ENCODE measurements at regions of chr20 and their contacts with region 1.

Region 1: GRCh38 chr20:63911176-63911575 is 16.2 kb downstream of the DNAJC5 start:
- DNase-seq: no peak
- ATAC-seq: no peak
- H3K4me3 ChIP-seq: no peak overlapping the region
- H3K27ac ChIP-seq: no peak overlapping the region
- H3K4me1 ChIP-seq: peaks cover 40% of the 10 kb centered on the region
- H3K27me3 ChIP-seq: no peaks in the 10 kb centered on the region
- CTCF ChIP-seq: no peak
- EP300 ChIP-seq: no peak
- POLR2A ChIP-seq: no peak
- RAD21 ChIP-seq: no peak

Region 2: DNA sequence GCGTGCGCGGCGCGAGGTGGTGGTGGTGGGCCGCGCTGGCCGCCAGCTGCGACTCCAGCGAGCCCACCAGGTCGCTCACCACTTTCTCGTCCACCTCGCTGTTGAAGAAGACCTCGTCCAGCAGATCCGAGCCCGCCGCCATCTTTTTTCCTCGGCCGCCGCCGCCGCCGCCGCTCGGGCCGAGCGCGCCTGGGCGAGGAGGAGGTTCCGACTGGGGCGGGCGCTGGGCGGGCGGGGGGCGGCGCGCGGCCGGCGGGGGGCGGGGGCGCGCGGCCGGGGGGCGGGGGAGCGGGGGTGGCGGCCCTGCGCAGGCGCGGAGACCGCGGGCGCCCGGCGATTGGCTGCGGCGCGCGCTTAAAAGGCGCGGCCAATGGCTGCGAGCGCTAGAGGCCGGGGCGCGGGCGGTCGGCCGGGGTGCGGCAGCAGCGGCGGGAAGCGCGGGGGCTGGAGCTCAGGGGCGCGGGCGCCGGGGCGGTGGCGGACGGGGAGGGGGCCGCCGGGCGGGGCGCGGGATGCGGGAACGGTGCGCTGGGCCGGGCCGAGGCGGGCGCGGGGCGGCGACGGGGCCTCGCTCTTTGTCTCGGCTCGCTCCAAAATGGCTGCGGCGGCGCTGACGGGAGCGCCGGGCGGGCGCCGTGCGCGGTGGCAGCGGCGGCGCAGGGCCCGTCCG is 1845.4 kb before region 1 on chr20 and contains the start of gene TAF4:
- CTCF ChIA-PET with region 1: no interaction called
- POLR2A ChIA-PET with region 1: no interaction called
- in situ Hi-C with region 1: no loop called
- intact Hi-C with region 1: no loop called
- DNase-seq: peak; percentile 59
- ATAC-seq: no peak
- H3K4me3 ChIP-seq: peak within 1 kb of the TSS; percentile 70 to 81 (median 73)
- H3K27ac ChIP-seq: peak within 1 kb of the TSS; percentile 84
- H3K4me1 ChIP-seq: peaks cover 66% of the 10 kb centered on the region
- H3K27me3 ChIP-seq: no peaks in the 10 kb centered on the region
- CTCF ChIP-seq: no peak
- EP300 ChIP-seq: 0 out of 4 replicates have a peak, but pooled peaks of 1 of the 2 experiments have one; percentile 22
- POLR2A ChIP-seq: peak; percentile 92 to 95
- RAD21 ChIP-seq: peak; percentile 59; the same call in 1 of the 2 replicates
- total RNA-seq, gene TAF4: 12.0 and 12.2 TPM in 2 replicates

Region 3: DNA sequence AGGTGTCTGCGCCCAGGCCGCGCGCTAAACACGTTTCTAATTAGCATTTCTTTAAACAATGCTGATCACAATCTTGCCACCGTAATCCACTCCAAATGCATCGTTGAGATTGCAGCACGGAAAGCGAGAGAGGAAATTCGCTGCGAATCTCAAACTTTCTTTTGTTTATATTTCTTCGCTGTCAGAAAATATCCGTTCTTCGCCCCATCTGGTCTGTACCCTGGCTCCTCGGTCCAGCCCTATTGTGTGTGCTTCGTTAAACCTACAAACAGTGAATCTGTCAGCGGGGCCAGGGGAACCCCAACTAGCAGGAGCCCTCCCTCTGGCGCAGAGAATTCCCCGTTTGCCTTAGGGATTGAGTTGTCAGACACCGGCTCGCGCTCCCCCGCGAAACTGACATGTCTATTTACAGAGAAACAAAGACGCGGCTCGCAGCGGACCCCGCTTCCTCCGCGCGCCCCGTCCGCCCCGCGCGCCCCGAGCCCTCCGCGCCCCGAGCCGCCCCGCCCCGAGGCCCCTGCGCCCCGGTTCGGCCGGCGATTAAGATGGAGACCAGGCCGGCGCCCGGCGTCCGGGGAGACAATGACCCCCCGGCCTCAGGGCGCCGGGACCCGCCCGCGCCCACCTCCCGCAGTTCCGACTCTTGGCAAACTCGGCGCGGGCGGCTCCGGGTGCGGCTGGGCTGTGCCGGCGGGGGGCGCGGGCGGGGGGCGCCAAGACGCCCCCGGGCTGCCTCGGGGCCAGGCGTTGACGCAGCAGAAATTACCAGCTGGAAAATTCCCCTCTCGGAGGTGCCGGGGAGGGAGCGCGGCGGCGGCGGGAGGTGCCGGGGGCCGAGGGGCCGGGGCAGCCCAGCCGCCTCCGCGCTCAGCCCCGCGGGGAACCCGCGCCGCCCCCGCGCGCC is 81.0 kb before region 1 on chr20:
- CTCF ChIA-PET with region 1: no interaction called
- POLR2A ChIA-PET with region 1: no interaction called
- in situ Hi-C with region 1: no loop called
- intact Hi-C with region 1: no loop called
- DNase-seq: no peak
- ATAC-seq: no peak
- H3K4me3 ChIP-seq: peak overlapping the region; percentile 57 to 78 (median 68)
- H3K27ac ChIP-seq: no peak overlapping the region
- H3K4me1 ChIP-seq: peaks cover 58% of the 10 kb centered on the region
- H3K27me3 ChIP-seq: peaks cover 16 to 40% of the 10 kb centered on the region in 2 experiments
- CTCF ChIP-seq: no peak
- EP300 ChIP-seq: no peak
- POLR2A ChIP-seq: no peak
- RAD21 ChIP-seq: no peak

Region 4: DNA sequence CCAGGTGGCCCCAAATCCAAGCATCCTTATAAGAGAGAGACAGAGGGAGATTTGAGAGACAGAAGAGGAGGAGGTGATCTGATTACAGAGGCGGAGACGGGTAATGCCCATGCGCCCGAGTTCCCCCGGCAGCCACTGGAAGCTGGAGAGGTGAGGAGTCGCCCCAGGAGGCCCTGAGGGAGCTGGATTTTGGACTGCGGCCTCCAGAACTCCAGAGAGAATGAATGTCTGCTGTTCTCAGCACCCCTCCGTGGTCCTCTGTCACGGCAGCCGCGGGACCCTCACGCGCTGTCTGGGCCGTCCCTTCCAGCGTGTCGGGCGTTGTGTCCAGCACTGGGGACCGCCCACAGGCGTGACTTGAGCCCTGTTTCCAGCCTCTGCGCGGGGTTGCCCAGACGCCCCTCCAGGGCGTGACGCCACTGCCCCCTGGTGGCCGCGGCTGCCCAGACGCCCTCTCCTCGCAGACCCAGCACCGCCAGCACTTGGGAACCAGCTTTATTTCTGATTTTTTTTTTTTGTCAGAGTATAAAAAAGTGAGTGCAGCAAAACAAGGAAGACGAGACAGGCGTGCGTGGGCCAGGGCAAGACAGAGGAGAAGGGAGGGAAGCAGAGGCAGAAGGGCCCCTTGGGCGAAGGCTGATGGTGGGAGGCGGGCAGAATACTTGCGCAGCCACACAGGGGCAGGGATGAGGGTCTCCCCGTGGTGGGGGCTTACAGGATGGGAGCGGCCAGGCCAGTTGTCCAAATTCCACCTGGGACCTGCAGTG is 62.6 kb after region 1 on chr20:
- CTCF ChIA-PET with region 1: interaction called, 18 read pairs
- POLR2A ChIA-PET with region 1: interaction called, 3 read pairs
- in situ Hi-C with region 1: no loop called
- intact Hi-C with region 1: no loop called
- DNase-seq: peak; percentile 86
- ATAC-seq: peak; percentile 74
- H3K4me3 ChIP-seq: peak overlapping the region; percentile 43 to 75 (median 61); a peak in 5 of 6 replicates
- H3K27ac ChIP-seq: peak overlapping the region; percentile 13
- H3K4me1 ChIP-seq: peaks cover 54% of the 10 kb centered on the region
- H3K27me3 ChIP-seq: no peaks in the 10 kb centered on the region
- CTCF ChIP-seq: peak; percentile 100
- EP300 ChIP-seq: peak in 1 of 2 experiments; percentile 52; a peak in 1 of 4 replicates
- POLR2A ChIP-seq: no peak; a peak in 2 of 4 replicates
- RAD21 ChIP-seq: peak; percentile 99